ENCODE measurements at regions of chr3 and their contacts with region 1.

Region 1: GRCh38 chr3:189588070-189588820 is 42.9 kb upstream of the TP63 start:
- DNase-seq: peak; percentile 88
- ATAC-seq: peak; percentile 89
- H3K4me3 ChIP-seq: peak overlapping the region; percentile 21; the same call in 1 of the 2 replicates
- H3K27ac ChIP-seq: peak overlapping the region; percentile 63
- H3K4me1 ChIP-seq: peaks cover 21% of the 10 kb centered on the region
- H3K27me3 ChIP-seq: no peaks in the 10 kb centered on the region
- CTCF ChIP-seq: no peak

Region 2: GRCh38 chr3:187828579-187829452 is 1759.4 kb before region 1 on chr3:
- CTCF ChIA-PET with region 1: no interaction called
- POLR2A ChIA-PET with region 1: interaction called, 33 read pairs
- intact Hi-C with region 1: no loop called
- DNase-seq: no peak
- ATAC-seq: no peak
- H3K4me3 ChIP-seq: no peak overlapping the region
- H3K27ac ChIP-seq: no peak overlapping the region
- H3K4me1 ChIP-seq: no peaks in the 10 kb centered on the region
- H3K27me3 ChIP-seq: no peaks in the 10 kb centered on the region
- CTCF ChIP-seq: no peak